GM10248 (cell line): ENCODE measurements at regions of chr12 and their contacts with region 1.

Region 1: DNA sequence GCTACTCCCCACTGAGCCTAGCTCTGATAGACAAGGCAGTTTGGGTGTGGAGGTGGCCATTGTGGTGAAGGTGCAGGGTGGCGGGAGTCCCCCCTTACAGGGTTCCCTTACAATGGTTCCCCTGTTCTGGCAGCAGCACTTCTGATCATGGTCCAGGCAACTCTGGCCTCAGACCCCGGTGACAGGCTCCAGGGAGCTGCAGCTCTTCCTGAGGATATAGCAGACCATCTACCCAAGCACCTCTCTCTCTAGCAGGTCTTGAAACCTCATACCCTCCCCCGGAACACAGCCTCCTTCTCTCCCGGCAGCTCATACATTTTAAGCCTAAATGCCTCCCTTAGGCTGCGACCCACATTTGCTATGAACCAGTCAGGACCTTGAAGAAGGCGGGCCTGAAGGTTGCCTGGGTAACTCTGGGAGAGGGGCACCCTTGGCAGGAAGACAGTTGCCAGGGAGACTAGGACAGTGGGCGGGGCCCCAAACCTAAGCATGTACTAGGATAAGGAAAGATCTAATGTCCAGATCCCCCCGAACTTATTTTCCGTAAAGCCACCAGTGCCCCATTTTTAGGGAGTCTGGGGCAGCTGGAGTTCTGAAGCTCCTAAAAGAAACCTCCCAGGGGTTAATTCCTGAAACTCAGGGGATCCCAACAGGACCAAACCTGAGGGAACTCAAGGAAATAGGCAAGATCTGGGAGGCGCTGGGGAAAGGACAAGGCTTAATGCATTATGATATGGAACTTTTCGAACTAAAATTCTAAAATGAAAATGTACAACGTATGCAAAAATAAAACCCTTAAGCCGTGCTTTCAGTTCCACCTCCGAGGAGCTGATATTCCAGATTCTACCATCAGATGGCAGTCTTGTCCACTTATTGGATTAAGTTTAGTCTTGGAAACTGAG is 4.5 kb upstream of the GDF11 start:
- DNase-seq: peak; percentile 83
- CTCF ChIP-seq: peak; percentile 78

Region 2: DNA sequence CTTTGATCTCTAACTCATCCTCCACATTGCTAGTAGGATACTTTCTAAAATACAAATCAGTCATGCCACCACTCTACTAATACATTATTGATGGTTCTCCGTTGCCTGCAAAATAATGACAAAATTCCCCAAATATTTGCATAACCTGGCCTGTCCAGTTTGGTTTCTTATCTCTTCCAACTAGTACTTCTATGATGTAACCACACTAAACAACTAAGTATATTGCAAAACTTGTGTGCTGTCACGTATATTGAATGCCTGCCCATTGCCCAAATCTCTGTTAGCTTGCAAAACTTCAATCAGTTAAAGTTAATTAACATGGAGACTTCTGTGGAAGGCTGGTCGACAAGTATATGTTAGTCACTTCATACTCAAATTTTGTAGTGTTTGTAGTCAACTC is 487.4 kb before region 1 on chr12:
- CTCF ChIA-PET with region 1: no interaction called
- POLR2A ChIA-PET with region 1: no interaction called
- DNase-seq: no peak
- CTCF ChIP-seq: no peak

Region 3: DNA sequence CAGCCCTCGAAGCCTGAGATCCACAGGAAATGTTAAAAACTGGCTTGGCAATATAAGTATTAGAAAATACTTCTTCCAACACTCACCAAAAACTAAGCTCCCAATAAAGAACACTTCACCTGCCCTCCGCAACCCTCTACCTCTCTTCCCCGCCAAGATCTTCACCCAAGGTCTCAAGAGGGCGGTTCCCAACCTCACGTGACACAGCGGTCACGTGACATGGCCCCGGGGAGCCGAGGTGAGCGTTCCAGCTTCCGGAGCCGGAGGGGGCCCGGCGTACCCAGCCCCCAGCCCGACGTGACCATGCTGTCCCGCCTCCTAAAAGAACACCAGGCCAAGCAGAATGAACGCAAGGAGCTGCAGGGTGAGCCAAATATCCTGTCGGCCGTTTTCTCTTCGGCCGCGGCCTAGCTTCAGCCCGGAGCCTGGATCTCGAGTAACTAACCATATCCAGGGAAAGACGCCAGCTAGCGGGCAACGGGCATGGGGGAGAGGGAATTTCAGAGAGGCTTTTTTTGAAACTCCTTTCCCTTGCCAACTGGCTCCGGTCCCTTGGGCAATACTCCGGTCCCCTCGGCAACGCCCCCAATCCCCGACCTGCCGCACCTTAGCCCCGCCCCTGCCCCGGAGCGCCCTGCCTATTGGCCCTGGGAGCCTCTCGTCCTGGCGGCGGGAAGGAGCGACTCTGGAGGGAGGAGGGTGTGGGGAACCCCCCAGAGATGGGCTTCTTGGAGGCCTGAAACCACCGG is 22.4 kb before region 1 on chr12 and contains the start of gene BLOC1S1:
- CTCF ChIA-PET with region 1: interaction called, 73 read pairs
- POLR2A ChIA-PET with region 1: no interaction called
- DNase-seq: peak; percentile 95
- CTCF ChIP-seq: no peak

Region 4: DNA sequence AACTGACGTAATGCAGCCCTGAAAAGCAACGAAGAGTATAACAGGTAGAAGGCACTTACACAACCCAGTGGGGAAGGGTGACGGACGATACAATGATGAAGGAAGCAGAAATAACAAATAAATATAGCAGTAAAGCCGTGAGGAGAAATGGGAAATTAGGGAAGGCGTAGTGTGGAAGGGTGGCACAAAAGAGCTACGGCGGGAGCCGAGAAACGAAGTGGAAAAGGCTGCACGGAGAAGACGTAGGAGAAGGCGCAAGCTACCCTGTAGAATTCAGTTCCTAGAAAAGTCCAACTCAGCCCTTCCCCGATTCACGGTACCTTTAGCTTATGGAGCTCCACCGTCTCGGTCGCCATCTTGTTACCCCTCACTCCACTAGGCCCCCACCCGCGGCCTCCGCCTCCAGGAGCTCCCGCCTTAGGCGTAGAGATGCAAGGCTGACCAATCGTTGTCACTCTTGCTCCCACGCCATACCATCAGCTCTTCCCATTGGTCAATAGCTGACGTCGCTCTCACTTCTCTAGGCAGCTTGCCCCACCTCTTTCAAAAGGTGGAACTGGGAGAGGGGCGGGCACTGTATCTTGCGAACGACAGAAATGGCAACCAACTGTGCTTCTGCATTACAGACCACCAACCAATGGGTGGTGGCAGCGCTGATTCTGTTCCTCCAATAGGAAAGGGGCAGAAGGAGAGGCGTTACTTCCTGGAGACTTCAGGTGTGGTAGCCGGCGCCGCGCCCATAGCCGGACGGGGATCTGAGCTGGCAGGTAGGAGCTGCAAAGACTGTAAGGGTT is 79.2 kb after region 1 on chr12 and contains the starts of genes ORMDL2 and SARNP:
- CTCF ChIA-PET with region 1: interaction called, 20 read pairs
- POLR2A ChIA-PET with region 1: interaction called, 6 read pairs
- DNase-seq: peak; percentile 97
- CTCF ChIP-seq: no peak

Region 5: DNA sequence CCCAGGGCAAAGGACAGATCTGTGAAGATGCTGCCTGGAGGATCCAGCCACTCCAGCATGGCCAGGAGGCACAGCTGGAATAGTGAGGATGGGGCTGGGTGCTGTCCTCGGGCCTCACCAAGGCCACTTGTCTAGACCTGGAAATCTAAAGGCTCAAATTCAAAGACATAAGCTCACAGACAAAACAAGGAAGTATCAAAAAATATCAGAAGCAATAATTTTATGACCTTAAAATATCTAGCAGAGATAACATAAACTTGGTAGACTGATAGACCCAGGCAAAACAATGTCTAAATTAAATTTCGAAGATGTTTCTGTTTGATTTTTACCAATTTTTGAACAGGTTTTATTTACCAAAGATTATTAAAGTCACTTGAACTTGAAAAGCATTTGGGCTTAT is 127.0 kb after region 1 on chr12:
- CTCF ChIA-PET with region 1: no interaction called
- POLR2A ChIA-PET with region 1: no interaction called
- DNase-seq: no peak
- CTCF ChIP-seq: no peak

Region 6: DNA sequence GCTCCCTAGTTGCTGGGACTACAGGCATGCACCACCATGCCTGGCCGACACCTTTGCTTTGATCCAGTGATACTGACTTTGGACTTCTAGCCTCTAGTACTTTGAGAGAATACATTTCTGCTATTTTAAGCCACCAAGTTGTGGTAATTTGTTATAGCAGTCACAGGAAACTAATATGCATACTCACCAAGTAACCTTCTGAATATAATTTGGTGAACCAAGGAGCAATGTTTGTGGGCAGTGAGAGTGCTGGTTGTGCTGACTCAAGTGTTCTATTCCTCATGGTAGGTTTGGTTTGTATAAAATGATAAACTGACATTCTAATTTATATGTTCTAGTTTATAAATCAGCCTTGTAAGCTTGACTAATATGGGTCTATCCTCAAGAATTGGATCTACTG is 146.7 kb after region 1 on chr12:
- CTCF ChIA-PET with region 1: no interaction called
- POLR2A ChIA-PET with region 1: no interaction called
- DNase-seq: no peak
- CTCF ChIP-seq: no peak

Region 7: DNA sequence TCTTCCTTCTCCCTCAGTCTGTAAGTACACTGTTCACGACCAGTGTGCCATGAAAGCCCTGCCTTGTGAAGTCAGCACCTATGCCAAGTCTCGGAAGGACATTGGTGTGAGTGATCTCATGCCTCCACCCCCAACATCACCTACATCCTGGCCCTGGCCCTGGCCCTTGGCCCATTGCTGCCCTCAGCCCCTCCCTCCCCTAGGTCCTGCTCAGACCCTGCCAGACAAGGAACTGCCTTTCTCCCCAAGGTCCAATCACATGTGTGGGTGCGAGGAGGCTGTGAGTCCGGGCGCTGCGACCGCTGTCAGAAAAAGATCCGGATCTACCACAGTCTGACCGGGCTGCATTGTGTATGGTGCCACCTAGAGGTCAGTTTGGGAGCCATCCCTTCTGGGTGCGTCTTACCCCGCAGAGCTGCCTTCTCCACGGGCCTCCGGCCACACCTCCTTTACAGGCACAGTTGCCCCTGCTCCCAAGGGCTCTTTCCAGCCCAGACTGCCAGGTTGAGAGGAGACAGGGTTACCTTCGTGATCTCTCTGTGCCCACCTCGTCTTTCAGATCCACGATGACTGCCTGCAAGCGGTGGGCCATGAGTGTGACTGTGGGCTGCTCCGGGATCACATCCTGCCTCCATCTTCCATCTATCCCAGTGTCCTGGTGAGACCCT is 201.8 kb after region 1 on chr12:
- CTCF ChIA-PET with region 1: interaction called, 71 read pairs
- POLR2A ChIA-PET with region 1: interaction called, 3 read pairs
- DNase-seq: peak; percentile 86
- CTCF ChIP-seq: peak; percentile 89

Region 8: DNA sequence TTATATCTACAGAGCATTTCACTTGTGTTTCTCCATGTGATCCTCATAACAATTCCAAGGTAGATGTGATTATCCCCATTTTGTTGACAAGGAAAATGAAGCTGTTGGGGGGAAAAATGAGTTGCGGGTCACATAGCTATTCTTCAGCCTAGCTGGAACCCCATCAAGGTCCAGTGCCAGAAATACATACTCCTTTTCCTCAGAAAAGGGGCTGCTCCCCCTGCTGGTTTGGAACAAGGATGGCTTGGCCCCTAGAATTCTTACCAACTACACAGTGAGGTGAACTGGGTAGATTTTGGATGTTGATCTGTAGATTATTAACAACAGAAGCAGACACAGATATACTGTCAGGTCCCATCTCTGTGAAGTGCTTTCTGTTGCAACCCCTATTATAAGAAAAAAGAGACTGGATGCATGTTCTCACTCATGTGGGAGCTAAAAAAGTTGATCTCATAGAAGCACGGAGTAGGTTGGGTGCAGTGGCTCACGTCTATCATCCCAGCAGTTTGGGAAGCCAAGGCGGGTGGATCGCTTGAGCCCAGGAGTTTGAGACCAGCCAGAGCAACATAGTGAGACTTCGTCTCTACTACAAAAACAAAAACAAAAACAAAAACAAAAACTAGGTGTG is 291.4 kb after region 1 on chr12:
- CTCF ChIA-PET with region 1: interaction called, 35 read pairs
- POLR2A ChIA-PET with region 1: interaction called, 7 read pairs
- DNase-seq: peak; percentile 64
- CTCF ChIP-seq: peak; percentile 68

Region 9: DNA sequence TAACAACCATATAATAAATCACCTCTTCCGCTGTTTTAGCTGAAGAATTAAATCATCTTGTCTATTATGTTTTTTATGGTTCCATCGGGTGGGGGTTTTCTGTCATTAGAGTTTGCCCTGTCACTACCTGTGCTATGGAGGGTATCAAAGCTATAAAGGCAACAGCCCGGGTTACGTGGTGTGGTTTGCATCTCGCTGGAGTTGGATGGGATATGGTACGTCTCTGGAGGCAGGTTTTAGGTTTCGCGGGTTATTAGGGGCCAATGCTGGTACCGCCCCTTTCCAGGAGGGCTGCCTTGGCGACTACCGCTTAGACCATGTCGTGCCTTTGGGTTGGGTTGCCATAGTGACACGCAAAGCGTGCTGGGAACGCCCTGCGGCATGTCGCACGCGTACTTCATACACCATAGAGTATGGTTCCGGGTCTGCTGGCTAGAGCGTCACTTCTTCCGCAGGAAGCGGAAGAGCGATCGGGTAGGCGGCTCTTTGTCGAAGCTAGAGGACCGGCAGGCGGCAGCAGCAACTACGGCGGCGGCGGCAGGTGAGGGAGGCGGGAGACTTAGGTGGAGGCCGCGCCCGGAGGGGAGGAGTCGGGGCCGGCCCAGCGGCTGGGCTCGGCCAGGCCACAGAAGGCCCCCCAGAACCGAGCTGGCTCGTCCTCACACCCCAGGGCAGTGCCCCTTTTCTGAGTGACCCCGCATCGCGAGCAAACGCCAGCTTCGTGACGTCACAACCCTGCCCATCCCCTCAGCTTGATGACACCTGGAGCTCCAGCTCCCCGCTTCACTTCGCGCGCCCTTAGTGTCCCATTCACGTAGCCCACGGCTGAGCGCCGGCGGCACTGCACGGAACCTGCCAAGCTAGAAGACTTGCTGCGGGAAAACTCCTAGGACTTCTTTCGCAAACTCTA is 379.7 kb after region 1 on chr12 and contains the start of gene ZC3H10:
- CTCF ChIA-PET with region 1: interaction called, 20 read pairs
- POLR2A ChIA-PET with region 1: no interaction called
- DNase-seq: peak; percentile 93
- CTCF ChIP-seq: peak; percentile 62